ENCODE measurements at regions of chr2 and their contacts with region 1.

Region 1: GRCh38 chr2:223896833-223897311 is 48.3 kb downstream of the WDFY1 start:
- DNase-seq: peak; percentile 57 to 80 (median 69)
- H3K4me3 ChIP-seq: peak overlapping the region in 1 of 3 experiments; percentile 38
- H3K4me3 Mint-ChIP-seq: peak overlapping the region in 1 of 2 donors; percentile 63
- H3K27ac ChIP-seq: peak overlapping the region in 1 of 2 donors; percentile 77
- H3K27ac Mint-ChIP-seq: peak overlapping the region; percentile 64 to 97 (median 83)
- H3K4me1 ChIP-seq: peaks cover 8 to 10% of the 10 kb centered on the region in 2 donors
- H3K4me1 Mint-ChIP-seq: peaks cover 30% of the 10 kb centered on the region
- H3K27me3 ChIP-seq: no peaks in the 10 kb centered on the region
- H3K27me3 Mint-ChIP-seq: peaks cover 0 to 4% (median 0%) of the 10 kb centered on the region in 3 donors
- CTCF ChIP-seq: no peak

Region 2: DNA sequence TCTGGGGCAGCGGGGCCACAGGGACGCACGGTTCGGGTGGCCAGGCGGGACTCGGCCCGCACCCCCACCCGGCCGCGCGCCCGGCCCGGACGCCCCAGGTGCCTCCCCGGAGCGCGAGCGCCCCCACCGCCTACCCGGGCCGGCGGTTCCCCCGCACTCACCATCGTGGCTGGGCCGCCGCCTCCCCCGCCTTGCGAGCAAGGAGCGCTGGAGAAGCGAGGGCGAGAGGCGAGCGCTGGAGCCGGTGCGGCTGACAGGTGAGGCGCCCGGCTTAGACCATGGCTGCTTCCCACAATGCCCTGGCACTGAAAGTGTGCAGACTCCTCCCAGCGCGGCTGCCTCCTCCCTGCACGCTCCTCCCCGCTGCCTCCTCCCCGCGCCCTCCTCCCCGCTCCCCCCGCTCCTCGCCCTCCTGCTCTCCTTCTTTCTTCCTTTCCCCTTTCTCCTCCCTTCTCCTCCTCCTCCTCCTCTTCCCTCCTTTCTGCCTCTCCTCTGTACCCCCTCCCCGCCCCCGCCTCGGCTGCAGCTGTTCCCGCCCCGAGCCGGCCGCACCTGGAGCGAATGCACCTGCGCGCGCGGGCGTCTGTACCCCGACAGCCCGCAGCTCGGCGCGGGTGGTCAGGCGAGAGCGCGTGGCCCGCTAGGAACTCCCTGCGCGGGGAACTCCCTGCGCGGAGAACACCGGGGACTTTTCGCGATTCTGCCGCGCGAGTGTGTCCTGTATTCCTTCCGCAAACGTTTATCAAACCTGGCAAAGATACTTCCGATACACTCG is 59.4 kb before region 1 on chr2 and contains the start of gene AP1S3:
- intact Hi-C with region 1: loop called in 1 of 2 experiments (anchors 5 kb)
- DNase-seq: peak; percentile 30 to 89 (median 47)
- H3K4me3 ChIP-seq: peak within 1 kb of the TSS; percentile 58 to 83 (median 77)
- H3K4me3 Mint-ChIP-seq: peak within 1 kb of the TSS; percentile 98
- H3K27ac ChIP-seq: peak within 1 kb of the TSS in 1 of 2 donors; percentile 21
- H3K27ac Mint-ChIP-seq: peak within 1 kb of the TSS; percentile 65 to 89 (median 85)
- H3K4me1 ChIP-seq: peaks cover 23 to 24% of the 10 kb centered on the region in 2 donors
- H3K4me1 Mint-ChIP-seq: peaks cover 32% of the 10 kb centered on the region
- H3K27me3 ChIP-seq: no peaks in the 10 kb centered on the region
- H3K27me3 Mint-ChIP-seq: peaks cover 2 to 3% (median 3%) of the 10 kb centered on the region in 3 donors
- CTCF ChIP-seq: no peak
- polyA plus RNA-seq, gene AP1S3: 0.80 to 1.3 (median 0.81) TPM

Region 3: GRCh38 chr2:223909001-223909741 is 12.3 kb after region 1 on chr2:
- intact Hi-C with region 1: no loop called
- DNase-seq: peak in 1 of 3 donors; percentile 39
- H3K4me3 ChIP-seq: no peak overlapping the region
- H3K4me3 Mint-ChIP-seq: peak overlapping the region in 1 of 2 donors; percentile 54
- H3K27ac ChIP-seq: peak overlapping the region; percentile 44 to 67
- H3K27ac Mint-ChIP-seq: peak overlapping the region in 5 of 7 donors; percentile 11 to 93 (median 74)
- H3K4me1 ChIP-seq: peaks cover 11 to 20% of the 10 kb centered on the region in 2 donors
- H3K4me1 Mint-ChIP-seq: peaks cover 29% of the 10 kb centered on the region
- H3K27me3 ChIP-seq: no peaks in the 10 kb centered on the region
- H3K27me3 Mint-ChIP-seq: peaks cover 0 to 1% (median 0%) of the 10 kb centered on the region in 3 donors
- CTCF ChIP-seq: no peak

Region 4: DNA sequence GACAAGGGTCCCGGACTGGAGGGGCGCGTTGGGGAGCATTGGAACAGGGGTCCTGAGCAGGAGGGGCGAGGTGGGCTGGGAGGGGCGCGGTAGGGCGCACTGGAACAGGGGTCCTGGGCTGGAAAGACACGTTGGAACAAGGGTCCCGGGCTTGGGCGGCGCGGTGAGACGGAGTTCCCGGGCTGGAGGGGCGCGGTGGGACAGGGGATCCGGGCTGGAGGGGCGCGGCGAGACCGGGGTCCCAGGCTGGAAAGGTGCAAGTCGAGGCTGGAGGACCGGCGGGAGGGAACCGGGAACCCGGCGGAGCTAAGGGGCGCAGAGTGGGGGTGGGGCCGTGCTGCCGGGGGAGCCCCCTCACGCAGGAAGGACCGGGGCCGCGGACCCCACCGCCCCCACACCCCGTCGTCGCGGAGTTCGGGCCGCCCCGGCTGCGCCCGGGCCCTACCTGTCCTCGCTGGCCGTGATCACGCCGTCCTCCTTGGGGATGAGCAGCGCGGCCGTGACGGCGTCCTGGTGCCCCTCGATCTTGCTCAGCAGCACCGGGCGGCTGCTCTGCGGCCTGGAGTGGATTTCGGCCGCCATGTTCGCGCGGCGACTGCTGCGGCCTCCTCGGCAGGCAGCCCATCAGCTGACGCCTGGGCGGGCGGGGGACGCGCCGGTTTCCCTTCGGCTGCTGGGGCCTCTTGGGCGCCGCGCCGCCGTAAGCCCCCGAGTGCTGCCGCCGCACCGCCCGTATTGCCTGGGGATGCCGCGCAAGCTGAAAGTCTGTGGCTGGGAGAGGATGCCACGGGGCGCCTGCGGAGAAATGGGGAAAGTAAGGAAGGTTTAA is 48.0 kb after region 1 on chr2 and contains the start of gene WDFY1:
- intact Hi-C with region 1: loop called in 1 of 2 experiments (anchors 5 kb)
- DNase-seq: peak; percentile 77 to 80 (median 80)
- H3K4me3 ChIP-seq: peak within 1 kb of the TSS; percentile 61 to 95 (median 81)
- H3K4me3 Mint-ChIP-seq: peak within 1 kb of the TSS; percentile 97 to 98
- H3K27ac ChIP-seq: peak within 1 kb of the TSS; percentile 63 to 96
- H3K27ac Mint-ChIP-seq: peak within 1 kb of the TSS; percentile 87 to 96 (median 93)
- H3K4me1 ChIP-seq: peaks cover 8 to 24% of the 10 kb centered on the region in 2 donors
- H3K4me1 Mint-ChIP-seq: peaks cover 36% of the 10 kb centered on the region
- H3K27me3 ChIP-seq: no peaks in the 10 kb centered on the region
- H3K27me3 Mint-ChIP-seq: peaks cover 0 to 5% (median 0%) of the 10 kb centered on the region in 3 donors
- CTCF ChIP-seq: no peak
- polyA plus RNA-seq, gene WDFY1: 31.7 to 59.8 (median 40.7) TPM

Region 5: DNA sequence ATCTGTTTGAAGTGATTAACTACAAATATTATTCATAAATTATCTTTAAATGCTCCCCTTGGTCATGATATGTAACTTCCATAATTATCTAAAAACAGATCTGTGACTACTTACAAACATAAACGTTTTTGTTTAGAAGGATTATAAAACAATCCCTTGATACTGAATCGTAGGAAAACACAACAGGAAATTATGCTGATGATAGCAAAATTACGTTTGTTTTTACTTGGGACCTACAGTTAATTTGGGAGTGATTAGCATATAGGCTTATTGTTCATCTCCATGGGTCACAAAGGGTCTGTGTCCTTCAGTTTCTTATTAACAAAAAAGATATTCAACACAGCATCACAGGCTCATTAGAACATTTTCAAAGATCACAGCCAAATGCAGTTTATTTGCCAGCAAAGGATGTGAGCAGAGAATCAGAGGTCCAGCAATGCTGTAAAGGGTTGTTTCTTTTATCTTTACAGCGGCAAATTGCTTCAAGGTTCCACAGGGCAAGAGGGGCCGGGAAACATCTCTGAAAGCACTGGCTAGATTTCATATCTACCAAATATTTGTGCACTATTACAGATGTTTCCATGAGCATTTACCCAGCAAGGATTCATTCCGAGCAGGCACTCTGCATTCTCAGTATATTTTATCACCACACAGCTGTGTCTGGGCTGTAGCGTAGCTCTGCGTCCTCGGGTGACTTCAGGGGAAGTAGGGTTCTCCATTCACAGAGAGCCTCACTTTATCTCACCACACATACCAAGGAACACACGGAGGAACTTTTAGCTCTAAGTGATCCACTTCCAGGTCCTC is 815.2 kb after region 1 on chr2:
- intact Hi-C with region 1: no loop called
- DNase-seq: no peak
- H3K4me3 ChIP-seq: no peak overlapping the region
- H3K4me3 Mint-ChIP-seq: no peak overlapping the region
- H3K27ac ChIP-seq: no peak overlapping the region
- H3K27ac Mint-ChIP-seq: no peak overlapping the region
- H3K4me1 ChIP-seq: no peaks in the 10 kb centered on the region
- H3K4me1 Mint-ChIP-seq: no peaks in the 10 kb centered on the region
- H3K27me3 ChIP-seq: no peaks in the 10 kb centered on the region
- H3K27me3 Mint-ChIP-seq: peaks cover 2 to 4% (median 4%) of the 10 kb centered on the region in 3 donors
- CTCF ChIP-seq: no peak